OCI-LY7 (cell line): ENCODE measurements at regions of chr6 and their contacts with region 1.

Region 1: DNA sequence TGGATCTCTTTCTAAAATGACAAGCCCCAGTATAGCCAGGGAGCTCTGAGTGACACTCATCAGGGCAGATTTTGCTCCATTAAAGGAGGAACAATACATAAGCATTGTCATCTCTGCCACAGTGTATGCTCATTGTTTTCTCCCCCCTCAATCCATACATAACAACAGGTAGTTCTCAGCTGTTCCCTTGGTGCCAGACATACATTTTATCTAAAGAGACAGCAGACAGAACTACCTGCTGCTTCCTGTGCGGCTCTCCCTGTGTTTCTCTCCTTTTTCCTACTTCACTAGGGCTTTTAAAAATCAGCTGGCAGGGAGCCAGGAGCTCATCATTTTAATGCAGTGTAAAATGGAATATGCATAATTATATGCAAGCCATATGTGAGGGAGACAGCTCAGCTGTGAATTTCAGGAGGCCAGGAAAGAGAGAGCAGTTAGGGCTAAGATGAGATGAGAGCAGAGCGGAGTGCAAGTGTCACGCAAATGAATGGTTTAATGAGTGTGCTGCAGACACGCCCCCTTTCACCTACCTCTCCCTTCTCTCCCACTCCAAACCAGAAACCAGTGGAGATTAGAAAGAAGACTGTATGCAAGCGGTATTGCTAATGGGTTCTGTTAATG is 96.0 kb downstream of the SOBP start:
- DNase-seq: no peak
- H3K4me3 ChIP-seq: no peak overlapping the region
- H3K27ac ChIP-seq: no peak overlapping the region
- H3K4me1 ChIP-seq: peaks cover 13% of the 10 kb centered on the region
- CTCF ChIP-seq: no peak

Region 2: GRCh38 chr6:107114213-107114905 is 471.6 kb before region 1 on chr6:
- CTCF ChIA-PET with region 1: no interaction called
- POLR2A ChIA-PET with region 1: no interaction called
- intact Hi-C with region 1: no loop called
- DNase-seq: peak; percentile 91
- H3K4me3 ChIP-seq: peak overlapping the region; percentile 71
- H3K27ac ChIP-seq: peak overlapping the region; percentile 99
- H3K4me1 ChIP-seq: peaks cover 53% of the 10 kb centered on the region
- CTCF ChIP-seq: peak; percentile 83

Region 3: DNA sequence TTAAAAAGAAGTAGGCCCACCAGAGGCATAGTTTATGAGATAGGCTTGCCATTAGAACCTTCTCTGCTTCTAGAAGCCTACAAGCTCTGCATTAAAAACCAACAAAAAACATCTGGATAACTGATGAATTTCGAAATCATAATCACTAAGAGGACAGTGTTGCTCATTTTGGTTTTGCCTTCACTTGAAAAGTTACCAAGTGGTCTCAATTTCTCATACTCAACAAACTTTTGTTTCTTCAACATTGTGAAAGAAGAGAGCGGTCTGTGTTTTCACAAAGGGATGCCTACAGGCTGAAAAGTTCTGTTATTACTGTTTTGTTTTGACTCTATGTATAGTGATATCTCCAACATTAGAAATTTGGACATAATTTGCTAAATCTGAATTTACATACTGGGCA is 225.4 kb before region 1 on chr6:
- CTCF ChIA-PET with region 1: no interaction called
- POLR2A ChIA-PET with region 1: no interaction called
- intact Hi-C with region 1: no loop called
- DNase-seq: no peak
- H3K4me3 ChIP-seq: no peak overlapping the region
- H3K27ac ChIP-seq: no peak overlapping the region
- H3K4me1 ChIP-seq: no peaks in the 10 kb centered on the region
- CTCF ChIP-seq: no peak

Region 4: DNA sequence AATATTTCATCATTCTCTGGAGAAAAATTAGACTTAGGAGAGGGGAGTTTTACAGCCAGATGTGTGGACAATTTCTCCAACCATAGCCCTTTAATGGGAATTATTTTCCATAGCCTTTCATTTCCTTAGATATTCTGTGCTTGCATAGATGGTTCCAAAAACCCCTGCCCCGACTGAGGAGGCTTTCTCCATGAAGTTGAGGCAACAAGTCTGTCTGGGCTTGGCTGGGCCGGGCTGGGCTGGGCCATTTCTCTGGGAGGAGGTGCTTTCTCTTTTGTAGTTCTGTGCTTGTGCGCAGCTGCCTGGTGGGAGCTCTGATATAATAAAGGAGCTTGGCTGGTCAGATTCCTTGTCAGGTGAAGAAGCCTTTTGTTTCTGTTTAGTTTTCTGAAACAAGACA is 24.6 kb before region 1 on chr6:
- CTCF ChIA-PET with region 1: no interaction called
- POLR2A ChIA-PET with region 1: no interaction called
- intact Hi-C with region 1: no loop called
- DNase-seq: no peak
- H3K4me3 ChIP-seq: no peak overlapping the region
- H3K27ac ChIP-seq: no peak overlapping the region
- H3K4me1 ChIP-seq: peaks cover 15% of the 10 kb centered on the region
- CTCF ChIP-seq: no peak

Region 5: DNA sequence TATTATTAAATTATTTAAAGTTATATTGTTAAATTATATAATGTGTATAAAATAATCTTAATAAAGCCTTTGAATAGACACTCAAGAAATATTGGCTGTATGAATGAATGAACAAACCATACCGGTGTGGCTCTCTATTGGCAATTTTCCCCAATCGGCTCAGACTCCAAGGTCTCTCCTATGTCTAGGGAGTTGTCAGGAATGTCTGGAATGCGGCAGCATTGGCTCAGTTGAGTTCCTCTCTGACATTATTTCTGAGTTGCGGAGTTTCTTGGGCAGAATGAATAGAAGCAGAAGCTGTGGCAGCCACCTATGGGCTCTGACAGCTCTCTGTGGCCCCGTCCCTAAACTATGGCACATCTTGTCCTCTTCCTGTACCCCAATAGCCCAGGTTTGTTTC is 15.0 kb after region 1 on chr6:
- CTCF ChIA-PET with region 1: no interaction called
- POLR2A ChIA-PET with region 1: interaction called, 21 read pairs
- intact Hi-C with region 1: no loop called
- DNase-seq: no peak
- H3K4me3 ChIP-seq: no peak overlapping the region
- H3K27ac ChIP-seq: no peak overlapping the region
- H3K4me1 ChIP-seq: peaks cover 19% of the 10 kb centered on the region
- CTCF ChIP-seq: no peak